B cell (primary cell): ENCODE measurements at regions of chr3 and their contacts with region 1.

Region 1: DNA sequence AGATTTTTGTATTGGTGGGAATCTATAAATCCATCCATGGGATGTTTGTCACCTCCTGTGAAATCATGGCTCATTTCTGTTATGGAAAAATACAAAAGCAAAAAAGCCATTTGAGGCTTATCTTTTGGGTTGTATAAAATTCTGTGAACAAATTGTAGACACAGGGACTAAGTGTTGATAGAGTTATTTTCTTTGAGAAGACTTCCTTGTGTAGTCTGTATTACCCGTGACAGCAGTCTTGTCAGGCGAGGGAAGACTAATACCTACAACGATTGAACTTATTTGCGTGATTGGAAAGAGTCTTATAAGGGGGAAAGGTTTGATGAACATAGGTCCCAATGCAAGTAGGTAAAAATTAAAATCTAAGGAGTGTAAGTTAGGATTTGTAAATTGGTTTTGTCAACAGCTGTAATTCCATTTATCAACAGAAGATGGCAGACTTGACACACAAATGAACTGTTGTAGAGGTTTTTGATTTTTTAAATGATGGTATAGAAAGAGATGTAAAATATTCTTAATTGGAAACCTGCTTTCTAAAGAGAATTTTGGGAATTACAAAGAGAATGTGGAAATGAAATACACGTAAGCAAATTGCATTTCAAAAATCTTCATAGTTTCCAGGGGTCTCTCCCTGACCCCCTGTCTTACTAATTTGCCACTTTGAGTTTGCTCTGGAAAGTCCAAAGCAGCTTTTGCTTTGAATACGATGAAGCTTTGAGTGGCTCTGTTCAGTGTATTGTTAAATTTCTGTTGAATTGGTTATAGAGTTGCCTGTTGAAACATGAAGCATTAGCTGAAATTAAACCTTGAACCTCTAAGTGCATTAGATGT is 33.2 kb downstream of the SLC25A26 start:
- DNase-seq: peak; percentile 62
- ATAC-seq: no peak
- H3K4me3 ChIP-seq: no peak overlapping the region
- H3K4me3 Mint-ChIP-seq: no peak overlapping the region
- H3K27ac ChIP-seq: no peak overlapping the region
- H3K27ac Mint-ChIP-seq: no peak overlapping the region
- H3K4me1 ChIP-seq: peaks cover 12 to 14% of the 10 kb centered on the region in 2 donors
- H3K4me1 Mint-ChIP-seq: peaks cover 20% of the 10 kb centered on the region
- H3K27me3 ChIP-seq: no peaks in the 10 kb centered on the region
- H3K27me3 Mint-ChIP-seq: no peaks in the 10 kb centered on the region
- CTCF ChIP-seq: peak; percentile 98

Region 2: GRCh38 chr3:66242788-66243464 is 11.1 kb before region 1 on chr3:
- CTCF ChIA-PET with region 1: interaction called, 13 read pairs
- POLR2A ChIA-PET with region 1: no interaction called
- intact Hi-C with region 1: no loop called
- DNase-seq: no peak
- ATAC-seq: no peak
- H3K4me3 ChIP-seq: no peak overlapping the region
- H3K4me3 Mint-ChIP-seq: no peak overlapping the region
- H3K27ac ChIP-seq: no peak overlapping the region
- H3K27ac Mint-ChIP-seq: no peak overlapping the region
- H3K4me1 ChIP-seq: no peaks in the 10 kb centered on the region
- H3K4me1 Mint-ChIP-seq: peaks cover 6% of the 10 kb centered on the region
- H3K27me3 ChIP-seq: no peaks in the 10 kb centered on the region
- H3K27me3 Mint-ChIP-seq: no peaks in the 10 kb centered on the region
- CTCF ChIP-seq: no peak

Region 3: GRCh38 chr3:66276705-66277274 is 22.8 kb after region 1 on chr3:
- CTCF ChIA-PET with region 1: interaction called, 16 read pairs
- POLR2A ChIA-PET with region 1: no interaction called
- intact Hi-C with region 1: loop called (anchors 1 kb)
- DNase-seq: peak; percentile 71
- ATAC-seq: peak; percentile 45
- H3K4me3 ChIP-seq: no peak overlapping the region
- H3K4me3 Mint-ChIP-seq: no peak overlapping the region
- H3K27ac ChIP-seq: no peak overlapping the region
- H3K27ac Mint-ChIP-seq: no peak overlapping the region
- H3K4me1 ChIP-seq: no peaks in the 10 kb centered on the region
- H3K4me1 Mint-ChIP-seq: no peaks in the 10 kb centered on the region
- H3K27me3 ChIP-seq: no peaks in the 10 kb centered on the region
- H3K27me3 Mint-ChIP-seq: no peaks in the 10 kb centered on the region
- CTCF ChIP-seq: peak; percentile 87

Region 4: GRCh38 chr3:66407611-66408218 is 153.7 kb after region 1 on chr3:
- CTCF ChIA-PET with region 1: interaction called, 11 read pairs
- POLR2A ChIA-PET with region 1: no interaction called
- intact Hi-C with region 1: no loop called
- DNase-seq: peak; percentile 70
- ATAC-seq: peak; percentile 89
- H3K4me3 ChIP-seq: no peak overlapping the region
- H3K4me3 Mint-ChIP-seq: no peak overlapping the region
- H3K27ac ChIP-seq: no peak overlapping the region
- H3K27ac Mint-ChIP-seq: no peak overlapping the region
- H3K4me1 ChIP-seq: no peaks in the 10 kb centered on the region
- H3K4me1 Mint-ChIP-seq: no peaks in the 10 kb centered on the region
- H3K27me3 ChIP-seq: no peaks in the 10 kb centered on the region
- H3K27me3 Mint-ChIP-seq: no peaks in the 10 kb centered on the region
- CTCF ChIP-seq: peak; percentile 80

Region 5: GRCh38 chr3:66816090-66816761 is 562.2 kb after region 1 on chr3:
- CTCF ChIA-PET with region 1: interaction called, 354 read pairs
- POLR2A ChIA-PET with region 1: no interaction called
- intact Hi-C with region 1: loop called (anchors 1 kb)
- DNase-seq: peak; percentile 52
- ATAC-seq: peak; percentile 47
- H3K4me3 ChIP-seq: no peak overlapping the region
- H3K4me3 Mint-ChIP-seq: no peak overlapping the region
- H3K27ac ChIP-seq: no peak overlapping the region
- H3K27ac Mint-ChIP-seq: no peak overlapping the region
- H3K4me1 ChIP-seq: no peaks in the 10 kb centered on the region
- H3K4me1 Mint-ChIP-seq: no peaks in the 10 kb centered on the region
- H3K27me3 ChIP-seq: peaks cover 0 to 6% (median 2%) of the 10 kb centered on the region in 4 experiments
- H3K27me3 Mint-ChIP-seq: peaks cover 15% of the 10 kb centered on the region
- CTCF ChIP-seq: peak; percentile 85